Activated CD4-positive, alpha-beta T cell treated with anti-CD3 and anti-CD28 coated beads for 36 hours (primary cell): ENCODE measurements at regions of chr2 and their contacts with region 1.

Region 1: DNA sequence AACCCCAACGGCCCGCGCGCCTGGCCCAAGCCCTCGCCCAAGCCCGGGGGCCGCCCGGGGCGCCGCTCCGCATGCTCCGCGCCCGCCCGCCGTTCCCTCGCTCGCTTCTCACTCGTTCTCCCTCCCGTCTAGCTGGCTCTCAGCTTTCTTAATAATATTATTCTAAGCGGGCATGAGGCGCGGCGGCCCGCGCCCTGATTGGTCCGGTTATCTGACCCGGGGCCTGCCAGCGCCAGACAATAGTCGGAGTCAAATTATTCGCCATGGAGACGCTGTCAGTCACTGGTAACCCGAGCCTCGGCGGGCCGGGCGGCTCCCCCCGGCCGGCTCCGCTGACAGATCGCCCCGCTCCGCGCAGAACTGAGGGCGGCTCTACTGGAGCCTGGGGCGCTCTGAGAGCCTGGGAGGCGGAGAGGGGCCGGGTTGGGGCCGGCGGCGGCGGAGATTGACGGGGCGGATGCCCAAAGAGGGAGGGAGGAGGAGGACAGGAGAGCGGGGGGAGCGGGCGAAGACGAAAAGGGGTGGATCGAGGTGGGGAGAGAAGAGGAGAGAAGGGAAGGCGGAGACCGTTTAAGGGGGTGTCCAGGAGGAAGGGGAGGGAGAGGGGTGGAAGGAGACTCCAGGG is at the start of gene SIX2:
- DNase-seq: peak; percentile 38
- ATAC-seq: peak; percentile 16
- H3K4me3 Mint-ChIP-seq: peak within 1 kb of the TSS; percentile 53
- H3K27ac Mint-ChIP-seq: no peak within 1 kb of the TSS
- H3K4me1 Mint-ChIP-seq: peaks cover 21% of the 10 kb centered on the region
- H3K27me3 Mint-ChIP-seq: peaks cover 67% of the 10 kb centered on the region
- total RNA-seq, gene SIX2: not detected

Region 2: DNA sequence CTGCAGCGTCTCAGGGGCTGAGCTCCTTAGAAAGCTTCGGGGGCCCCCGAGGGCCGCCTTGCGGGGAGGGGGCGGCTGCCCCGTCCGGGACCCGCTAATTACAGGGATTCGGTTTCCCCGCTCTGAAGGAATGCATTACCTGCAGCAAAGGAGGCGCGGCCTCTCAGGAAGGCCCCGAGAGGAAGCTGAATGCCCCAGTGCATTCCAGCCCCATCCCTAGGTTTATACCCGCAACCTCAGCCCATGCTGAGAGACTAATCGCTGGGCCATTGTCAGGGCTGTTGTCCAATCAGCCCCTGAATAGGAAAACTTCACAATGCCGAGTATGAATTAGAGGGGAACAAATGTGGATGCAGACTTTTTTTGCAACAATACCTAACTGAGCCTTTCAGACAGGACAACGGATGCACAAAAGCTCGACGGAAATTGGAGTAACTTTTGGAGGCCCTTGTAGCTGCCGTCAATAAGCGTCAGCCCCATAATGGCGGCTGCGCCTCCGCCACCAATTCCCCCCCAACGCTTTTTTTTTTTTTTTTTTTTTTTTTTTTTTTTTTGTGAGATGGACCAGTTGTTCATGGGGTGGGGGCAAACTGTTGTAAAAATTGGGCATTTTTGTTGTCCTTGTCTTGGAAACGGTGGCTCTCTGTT is 206.5 kb before region 1 on chr2:
- CTCF ChIA-PET with region 1: interaction called, 3 read pairs
- POLR2A ChIA-PET with region 1: no interaction called
- intact Hi-C with region 1: loop called (anchors 5 kb)
- DNase-seq: no peak
- ATAC-seq: no peak
- H3K4me3 Mint-ChIP-seq: no peak overlapping the region
- H3K27ac Mint-ChIP-seq: no peak overlapping the region
- H3K4me1 Mint-ChIP-seq: peaks cover 14% of the 10 kb centered on the region
- H3K27me3 Mint-ChIP-seq: peaks cover 77% of the 10 kb centered on the region

Region 3: DNA sequence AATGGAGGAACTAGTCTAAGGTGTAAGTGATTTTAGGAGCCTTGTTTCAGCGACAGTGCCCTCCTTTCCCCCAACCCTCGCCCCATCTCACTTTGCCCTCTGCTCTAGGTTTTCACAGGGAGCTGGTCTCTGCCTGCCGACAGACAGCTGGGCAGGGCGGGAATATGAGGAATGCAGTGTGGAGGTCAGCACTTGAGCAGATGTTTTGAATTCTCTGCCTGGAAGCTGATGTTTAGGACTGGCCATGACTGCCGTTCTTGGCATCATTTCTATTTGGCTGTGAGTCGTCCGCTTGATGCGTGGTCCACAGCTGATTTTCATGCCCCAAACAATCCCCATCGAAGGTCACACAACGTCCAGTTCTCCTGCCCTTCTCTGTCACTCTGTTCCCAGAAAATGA is 123.0 kb before region 1 on chr2:
- CTCF ChIA-PET with region 1: no interaction called
- POLR2A ChIA-PET with region 1: no interaction called
- intact Hi-C with region 1: no loop called
- DNase-seq: no peak
- ATAC-seq: no peak
- H3K4me3 Mint-ChIP-seq: no peak overlapping the region
- H3K27ac Mint-ChIP-seq: no peak overlapping the region
- H3K4me1 Mint-ChIP-seq: no peaks in the 10 kb centered on the region
- H3K27me3 Mint-ChIP-seq: peaks cover 19% of the 10 kb centered on the region

Region 4: GRCh38 chr2:44941551-44942234 is 67.7 kb before region 1 on chr2 and contains the start of gene SIX3:
- CTCF ChIA-PET with region 1: no interaction called
- POLR2A ChIA-PET with region 1: no interaction called
- intact Hi-C with region 1: loop called in 1 of 2 experiments (anchors 5 kb)
- DNase-seq: peak; percentile 74
- ATAC-seq: peak; percentile 69
- H3K4me3 Mint-ChIP-seq: peak within 1 kb of the TSS; percentile 70
- H3K27ac Mint-ChIP-seq: no peak within 1 kb of the TSS
- H3K4me1 Mint-ChIP-seq: peaks cover 37% of the 10 kb centered on the region
- H3K27me3 Mint-ChIP-seq: peaks cover 76% of the 10 kb centered on the region
- total RNA-seq, gene SIX3: not detected

Region 5: GRCh38 chr2:44981136-44982108 is 28.0 kb before region 1 on chr2:
- CTCF ChIA-PET with region 1: interaction called, 4 read pairs
- POLR2A ChIA-PET with region 1: no interaction called
- intact Hi-C with region 1: loop called in 1 of 2 experiments (anchors 1 kb)
- DNase-seq: peak; percentile 84
- ATAC-seq: peak; percentile 58
- H3K4me3 Mint-ChIP-seq: no peak overlapping the region
- H3K27ac Mint-ChIP-seq: no peak overlapping the region
- H3K4me1 Mint-ChIP-seq: peaks cover 2% of the 10 kb centered on the region
- H3K27me3 Mint-ChIP-seq: peaks cover 14% of the 10 kb centered on the region

Region 6: GRCh38 chr2:45169339-45170190 is 160.2 kb after region 1 on chr2:
- CTCF ChIA-PET with region 1: no interaction called
- POLR2A ChIA-PET with region 1: no interaction called
- intact Hi-C with region 1: loop called (anchors 5 to 10 kb)
- DNase-seq: peak; percentile 21
- ATAC-seq: peak; percentile 26
- H3K4me3 Mint-ChIP-seq: peak overlapping the region; percentile 50
- H3K27ac Mint-ChIP-seq: no peak overlapping the region
- H3K4me1 Mint-ChIP-seq: peaks cover 4% of the 10 kb centered on the region
- H3K27me3 Mint-ChIP-seq: peaks cover 57% of the 10 kb centered on the region